Activated B cell treated with CpG ODN at 0.5 μM for 24 hours (primary cell): ENCODE measurements at regions of chr14 and their contacts with region 1.

Region 1: DNA sequence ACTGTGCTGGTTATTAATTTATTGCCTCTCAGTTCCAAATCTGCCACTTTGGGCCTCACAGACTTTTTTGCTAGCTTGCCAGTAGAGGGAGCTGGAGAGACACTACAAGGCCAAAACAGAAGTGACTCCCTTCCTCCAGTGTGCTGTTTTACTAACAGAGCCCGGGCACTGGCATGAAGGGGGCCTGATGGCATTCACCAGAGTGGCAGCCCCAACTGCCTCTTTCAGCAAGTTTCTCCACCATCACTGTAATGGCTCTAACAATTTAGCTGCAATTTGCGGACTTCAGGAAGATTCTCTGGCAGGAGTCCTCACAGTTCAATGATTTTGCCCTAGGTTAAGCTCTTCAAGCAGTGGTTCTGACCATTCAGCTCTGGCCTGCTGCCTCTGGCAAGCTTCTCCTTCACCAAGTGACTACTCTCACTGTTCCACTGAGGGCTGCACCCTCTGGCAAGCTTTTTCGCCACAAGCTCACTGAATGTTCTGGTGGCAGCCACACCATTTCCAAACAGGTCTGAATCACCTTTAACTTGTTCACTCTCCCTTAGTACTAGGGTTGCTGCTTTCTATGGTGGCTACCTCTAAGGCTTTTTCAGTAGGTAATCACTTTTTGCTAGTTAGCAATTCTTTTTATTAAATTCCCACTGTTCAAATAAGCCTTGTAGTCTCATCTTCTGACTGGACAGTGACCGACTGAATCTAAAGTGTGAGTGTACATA is 104.9 kb downstream of the ZC3H14 start:
- DNase-seq: peak; percentile 32
- ATAC-seq: peak; percentile 83
- H3K4me3 Mint-ChIP-seq: peak overlapping the region; percentile 64
- H3K27ac Mint-ChIP-seq: peak overlapping the region; percentile 72
- H3K4me1 Mint-ChIP-seq: peaks cover 20% of the 10 kb centered on the region
- H3K27me3 Mint-ChIP-seq: no peaks in the 10 kb centered on the region
- CTCF ChIP-seq: peak; percentile 62

Region 2: GRCh38 chr14:88792572-88793258 is 125.0 kb after region 1 on chr14 and contains the start of gene EML5:
- CTCF ChIA-PET with region 1: interaction called, 5 read pairs
- POLR2A ChIA-PET with region 1: no interaction called
- intact Hi-C with region 1: loop called (anchors 1 kb)
- DNase-seq: peak; percentile 81
- ATAC-seq: peak; percentile 86
- H3K4me3 Mint-ChIP-seq: peak within 1 kb of the TSS; percentile 89
- H3K27ac Mint-ChIP-seq: peak within 1 kb of the TSS; percentile 71
- H3K4me1 Mint-ChIP-seq: peaks cover 24% of the 10 kb centered on the region
- H3K27me3 Mint-ChIP-seq: no peaks in the 10 kb centered on the region
- CTCF ChIP-seq: no peak
- total RNA-seq, gene EML5: 3.8 and 5.0 TPM in 2 replicates

Region 3: DNA sequence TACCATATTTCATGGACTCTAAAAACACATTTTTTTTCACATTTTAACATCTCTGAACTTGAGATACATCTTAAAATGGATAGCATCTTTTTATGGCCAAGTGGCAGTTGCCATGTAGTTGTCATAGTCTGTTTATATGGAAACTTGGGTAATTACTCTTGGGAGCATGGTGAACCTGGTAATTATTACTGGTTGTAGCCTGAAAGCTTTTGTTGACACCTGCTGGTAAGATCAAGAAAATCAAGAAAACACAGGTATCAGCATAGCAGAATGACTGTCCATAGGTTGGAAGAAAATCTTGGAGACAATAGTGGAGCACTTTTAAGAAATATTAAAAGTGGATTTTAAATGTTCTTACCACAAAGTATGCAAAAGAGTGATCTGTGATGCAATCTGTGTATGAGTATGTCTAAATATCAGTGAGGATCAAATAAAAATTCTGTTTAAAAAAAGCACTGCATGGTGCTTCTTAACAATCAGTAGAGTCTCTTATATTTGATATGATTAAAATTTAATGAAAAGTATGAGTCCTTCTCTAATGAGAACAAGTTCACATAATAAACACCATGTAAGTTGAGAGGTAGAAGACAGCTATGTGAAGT is 200.9 kb after region 1 on chr14:
- CTCF ChIA-PET with region 1: interaction called, 31 read pairs
- POLR2A ChIA-PET with region 1: no interaction called
- intact Hi-C with region 1: loop called (anchors 1 kb)
- DNase-seq: no peak
- ATAC-seq: no peak
- H3K4me3 Mint-ChIP-seq: no peak overlapping the region
- H3K27ac Mint-ChIP-seq: no peak overlapping the region
- H3K4me1 Mint-ChIP-seq: no peaks in the 10 kb centered on the region
- H3K27me3 Mint-ChIP-seq: no peaks in the 10 kb centered on the region
- CTCF ChIP-seq: no peak

Region 4: GRCh38 chr14:88910386-88910785 is 242.7 kb after region 1 on chr14:
- CTCF ChIA-PET with region 1: no interaction called
- POLR2A ChIA-PET with region 1: no interaction called
- intact Hi-C with region 1: no loop called
- DNase-seq: no peak
- ATAC-seq: no peak
- H3K4me3 Mint-ChIP-seq: no peak overlapping the region
- H3K27ac Mint-ChIP-seq: no peak overlapping the region
- H3K4me1 Mint-ChIP-seq: no peaks in the 10 kb centered on the region
- H3K27me3 Mint-ChIP-seq: no peaks in the 10 kb centered on the region
- CTCF ChIP-seq: no peak

Region 5: DNA sequence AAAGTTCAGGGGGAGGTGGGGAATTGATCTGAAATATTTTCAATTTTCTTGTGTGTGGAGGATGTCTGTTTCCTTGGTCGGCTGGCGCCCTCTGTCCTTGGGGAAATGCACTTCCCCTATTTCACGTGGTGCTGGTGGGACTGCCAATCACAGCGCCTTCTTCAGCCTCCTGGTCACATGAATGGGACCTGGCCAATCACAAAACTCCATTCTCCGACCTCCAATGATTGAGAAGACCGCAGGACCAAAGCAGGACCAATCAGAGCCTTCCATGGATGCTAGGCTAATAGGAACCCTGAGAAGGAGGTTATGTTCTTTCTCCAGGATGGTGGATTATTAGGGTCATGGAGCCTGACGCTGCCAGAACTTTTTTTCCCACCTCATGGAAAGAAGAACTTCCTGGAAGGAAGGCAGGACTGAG is 345.4 kb after region 1 on chr14:
- CTCF ChIA-PET with region 1: no interaction called
- POLR2A ChIA-PET with region 1: no interaction called
- intact Hi-C with region 1: loop called (anchors 5 kb)
- DNase-seq: no peak
- ATAC-seq: no peak
- H3K4me3 Mint-ChIP-seq: no peak overlapping the region
- H3K27ac Mint-ChIP-seq: no peak overlapping the region
- H3K4me1 Mint-ChIP-seq: no peaks in the 10 kb centered on the region
- H3K27me3 Mint-ChIP-seq: peaks cover 12% of the 10 kb centered on the region
- CTCF ChIP-seq: no peak

Region 6: GRCh38 chr14:89767861-89768268 is 1100.2 kb after region 1 on chr14:
- CTCF ChIA-PET with region 1: no interaction called
- POLR2A ChIA-PET with region 1: no interaction called
- intact Hi-C with region 1: loop called (anchors 5 kb)
- DNase-seq: peak; percentile 28
- ATAC-seq: peak; percentile 92
- H3K4me3 Mint-ChIP-seq: no peak overlapping the region
- H3K27ac Mint-ChIP-seq: peak overlapping the region; percentile 67
- H3K4me1 Mint-ChIP-seq: peaks cover 31% of the 10 kb centered on the region
- H3K27me3 Mint-ChIP-seq: no peaks in the 10 kb centered on the region
- CTCF ChIP-seq: peak; percentile 20

Region 7: GRCh38 chr14:90319173-90319572 is 1651.5 kb after region 1 on chr14:
- CTCF ChIA-PET with region 1: no interaction called
- POLR2A ChIA-PET with region 1: interaction called, 24 read pairs
- intact Hi-C with region 1: no loop called
- DNase-seq: no peak
- ATAC-seq: no peak
- H3K4me3 Mint-ChIP-seq: no peak overlapping the region
- H3K27ac Mint-ChIP-seq: no peak overlapping the region
- H3K4me1 Mint-ChIP-seq: peaks cover 6% of the 10 kb centered on the region
- H3K27me3 Mint-ChIP-seq: no peaks in the 10 kb centered on the region
- CTCF ChIP-seq: no peak